Activated naive CD4-positive, alpha-beta T cell treated with anti-CD3 and anti-CD28 coated beads for 36 hours (primary cell): ENCODE measurements at regions of chr6 and their contacts with region 1.

Region 1: DNA sequence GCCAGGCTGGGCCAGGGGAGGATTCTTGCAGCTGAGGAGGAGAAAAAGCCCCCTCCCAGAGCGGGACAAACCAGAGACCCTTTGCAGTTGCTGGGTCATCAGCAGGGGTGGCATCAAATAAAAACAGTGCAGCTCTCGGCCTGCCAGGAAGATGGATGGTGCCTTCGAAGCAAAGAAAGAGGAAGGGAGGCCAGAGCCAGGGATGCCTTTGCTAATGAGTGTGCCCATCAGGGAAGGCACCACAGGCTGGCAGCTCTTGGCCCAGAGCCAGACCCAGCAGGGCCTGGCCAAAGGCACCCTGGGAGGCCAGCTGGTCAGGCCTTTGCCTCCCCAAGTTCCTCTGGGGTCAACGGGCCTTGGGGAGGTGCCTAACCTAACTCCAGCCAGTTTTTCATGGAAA is 26.3 kb upstream of the ZNF318 start:
- DNase-seq: no peak
- H3K4me3 Mint-ChIP-seq: no peak overlapping the region
- H3K27ac Mint-ChIP-seq: no peak overlapping the region
- H3K4me1 Mint-ChIP-seq: peaks cover 12% of the 10 kb centered on the region
- H3K27me3 Mint-ChIP-seq: no peaks in the 10 kb centered on the region

Region 2: GRCh38 chr6:43361269-43361668 is 34.5 kb before region 1 on chr6:
- CTCF ChIA-PET with region 1: interaction called, 6 read pairs
- intact Hi-C with region 1: loop called (anchors 5 kb)
- DNase-seq: no peak
- H3K4me3 Mint-ChIP-seq: no peak overlapping the region
- H3K27ac Mint-ChIP-seq: no peak overlapping the region
- H3K4me1 Mint-ChIP-seq: peaks cover 23% of the 10 kb centered on the region
- H3K27me3 Mint-ChIP-seq: no peaks in the 10 kb centered on the region